Body of pancreas (tissue), 4 donors: ENCODE measurements at regions of chr10 and their contacts with region 1.

Region 1: GRCh38 chr10:23314835-23315239 is 29.8 kb downstream of the C10orf67 start:
- DNase-seq: peak; percentile 58 to 75 (median 65)
- ATAC-seq: peak; percentile 59
- H3K4me3 ChIP-seq: no peak overlapping the region
- H3K27ac ChIP-seq: no peak overlapping the region
- H3K4me1 ChIP-seq: no peaks in the 10 kb centered on the region
- H3K27me3 ChIP-seq: no peaks in the 10 kb centered on the region
- CTCF ChIP-seq: peak in 6 of 7 experiments; percentile 70 to 83 (median 72)
- POLR2A ChIP-seq: no peak

Region 2: GRCh38 chr10:23525406-23525805 is 210.6 kb after region 1 on chr10:
- intact Hi-C with region 1: loop called (anchors 5 kb)
- DNase-seq: peak; percentile 34 to 55 (median 46)
- ATAC-seq: peak; percentile 71
- H3K4me3 ChIP-seq: no peak overlapping the region
- H3K27ac ChIP-seq: no peak overlapping the region
- H3K4me1 ChIP-seq: no peaks in the 10 kb centered on the region
- H3K27me3 ChIP-seq: no peaks in the 10 kb centered on the region
- CTCF ChIP-seq: peak; percentile 32 to 72 (median 58)
- POLR2A ChIP-seq: no peak